K562 (cell line): ENCODE measurements at regions of chr15 and their contacts with region 1.

Region 1: DNA sequence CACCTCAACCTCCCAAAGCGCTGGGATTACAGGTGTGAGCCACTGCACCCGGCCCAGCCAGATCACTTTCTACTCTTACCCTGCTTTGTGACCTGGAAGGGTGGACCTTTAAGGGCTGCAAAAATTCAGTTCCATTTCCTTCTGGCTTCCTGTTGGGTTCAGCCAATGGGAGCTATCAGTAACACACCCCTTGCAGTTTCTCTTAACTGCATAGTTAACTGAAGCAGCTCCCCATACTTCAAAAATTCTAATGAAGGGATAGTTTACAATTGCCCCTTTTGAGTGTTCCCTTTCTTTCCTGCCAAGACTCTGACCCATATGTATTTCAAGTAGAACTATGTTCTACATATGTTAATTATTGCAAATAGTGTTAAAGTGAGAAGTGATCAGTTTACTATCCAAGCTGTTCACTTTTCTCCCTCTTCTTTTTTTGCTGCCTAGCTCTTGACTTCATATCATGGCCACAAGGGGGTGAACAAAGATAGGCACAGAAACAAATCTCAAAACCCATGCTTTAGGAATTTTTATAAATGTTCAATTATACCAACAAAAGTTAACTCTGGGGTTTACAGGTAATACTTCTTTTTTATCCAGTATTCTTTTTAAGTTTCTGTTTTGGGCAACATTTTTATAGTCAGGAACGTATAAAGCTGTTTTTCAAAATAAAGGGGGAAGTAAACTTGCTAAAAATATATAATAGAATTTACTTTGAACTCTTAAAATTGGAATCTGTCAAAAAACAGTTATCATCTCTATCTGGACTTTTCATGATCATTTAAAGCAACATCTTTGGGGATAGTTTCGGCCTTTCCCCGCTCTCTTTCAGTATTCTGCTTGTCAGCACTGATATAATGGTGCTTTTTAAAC is 8.1 kb downstream of the PGBD4 start:
- DNase-seq: peak; percentile 28 to 60 (median 36)
- ATAC-seq: peak; percentile 83
- H3K4me3 ChIP-seq: no peak overlapping the region
- H3K27ac ChIP-seq: no peak overlapping the region
- H3K4me1 ChIP-seq: no peaks in the 10 kb centered on the region
- H3K27me3 ChIP-seq: no peaks in the 10 kb centered on the region
- CTCF ChIP-seq: peak; percentile 65 to 84 (median 73); a peak in 5 of 6 replicates
- EP300 ChIP-seq: no peak
- POLR2A ChIP-seq: no peak
- RAD21 ChIP-seq: peak; percentile 68 to 91

Region 2: DNA sequence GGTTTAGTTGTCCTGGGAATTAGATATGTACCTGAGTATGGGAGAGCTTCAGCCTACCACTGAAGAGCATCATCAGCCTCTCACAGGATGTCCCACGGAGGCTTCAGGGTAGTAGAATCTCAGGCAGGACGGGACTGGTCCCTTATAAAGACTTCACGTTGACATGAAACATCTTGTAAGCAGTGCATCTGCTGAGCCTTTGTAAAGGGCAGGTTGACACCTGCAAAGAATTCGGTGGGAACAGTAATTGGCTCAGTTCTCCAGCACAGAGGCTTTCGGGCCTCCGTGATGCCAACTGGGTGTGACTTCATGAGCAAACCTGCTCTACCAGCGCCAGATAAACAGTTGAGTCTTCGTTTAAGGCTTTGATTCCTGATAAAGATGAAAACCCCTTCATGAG is 44.1 kb before region 1 on chr15:
- CTCF ChIA-PET with region 1: interaction called, 4 read pairs
- POLR2A ChIA-PET with region 1: no interaction called
- in situ Hi-C with region 1: no loop called
- intact Hi-C with region 1: loop called (anchors 2 kb)
- DNase-seq: no peak
- ATAC-seq: no peak
- H3K4me3 ChIP-seq: no peak overlapping the region
- H3K27ac ChIP-seq: no peak overlapping the region
- H3K4me1 ChIP-seq: no peaks in the 10 kb centered on the region
- H3K27me3 ChIP-seq: peaks cover 0 to 3% of the 10 kb centered on the region in 2 experiments; a peak in 2 of 5 replicates
- CTCF ChIP-seq: no peak
- EP300 ChIP-seq: no peak
- POLR2A ChIP-seq: no peak
- RAD21 ChIP-seq: no peak

Region 3: GRCh38 chr15:34085746-34086145 is 24.3 kb before region 1 on chr15:
- CTCF ChIA-PET with region 1: no interaction called
- POLR2A ChIA-PET with region 1: no interaction called
- in situ Hi-C with region 1: no loop called
- intact Hi-C with region 1: no loop called
- DNase-seq: no peak
- ATAC-seq: no peak
- H3K4me3 ChIP-seq: no peak overlapping the region
- H3K27ac ChIP-seq: no peak overlapping the region
- H3K4me1 ChIP-seq: no peaks in the 10 kb centered on the region
- H3K27me3 ChIP-seq: no peaks in the 10 kb centered on the region
- CTCF ChIP-seq: no peak
- EP300 ChIP-seq: no peak
- POLR2A ChIP-seq: no peak
- RAD21 ChIP-seq: no peak

Region 4: GRCh38 chr15:34126485-34126884 is 16.5 kb after region 1 on chr15:
- CTCF ChIA-PET with region 1: no interaction called
- POLR2A ChIA-PET with region 1: interaction called, 12 read pairs
- in situ Hi-C with region 1: no loop called
- intact Hi-C with region 1: no loop called
- DNase-seq: no peak
- ATAC-seq: no peak
- H3K4me3 ChIP-seq: no peak overlapping the region
- H3K27ac ChIP-seq: no peak overlapping the region
- H3K4me1 ChIP-seq: no peaks in the 10 kb centered on the region
- H3K27me3 ChIP-seq: no peaks in the 10 kb centered on the region
- CTCF ChIP-seq: no peak
- EP300 ChIP-seq: no peak
- POLR2A ChIP-seq: no peak
- RAD21 ChIP-seq: no peak